Activated naive CD8-positive, alpha-beta T cell treated with anti-CD3 and anti-CD28 coated beads, Interleukin-2, amount 10 ng/mL, durations not matched to agents 7 days and 5 days (primary cell): ENCODE measurements at regions of chr1 and their contacts with region 1.

Region 1: DNA sequence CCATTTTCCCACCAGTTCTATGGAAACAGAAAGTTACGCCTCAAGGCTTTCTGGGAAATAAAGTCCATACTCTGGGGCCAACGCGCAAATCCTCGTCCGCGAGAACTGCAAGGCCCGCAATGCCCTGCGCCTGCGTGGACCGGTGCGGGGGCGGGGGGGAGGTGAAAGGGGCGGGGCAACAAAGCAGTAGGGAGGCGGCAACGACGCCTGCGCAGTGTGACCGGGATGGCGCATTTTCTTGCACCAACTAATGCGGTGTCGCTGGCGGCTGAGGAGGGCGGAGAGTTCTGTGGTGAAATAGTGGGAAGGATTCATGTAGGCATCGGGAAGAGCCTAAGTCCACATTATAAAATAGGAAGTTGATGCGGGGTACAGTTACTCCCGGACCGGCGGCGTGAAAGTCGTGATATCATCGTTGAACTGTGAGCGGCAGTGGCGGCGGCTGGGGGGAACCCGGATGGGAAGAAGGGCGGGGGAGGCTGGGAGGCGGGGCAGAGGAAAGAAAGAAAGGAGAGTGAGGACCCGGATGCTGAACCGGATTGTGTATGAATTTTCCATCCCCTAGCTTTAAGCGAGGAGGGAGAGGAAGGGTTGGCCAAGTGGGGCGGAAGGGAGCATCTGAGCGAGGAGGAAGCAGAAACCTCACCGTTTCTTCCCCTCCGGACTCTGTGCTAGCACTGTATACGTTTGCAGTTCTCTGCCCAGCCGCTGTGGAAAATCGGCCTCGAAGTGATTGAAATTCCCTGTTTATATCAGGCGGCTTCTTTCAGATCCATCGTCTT is at the start of gene GGPS1:
- DNase-seq: peak; percentile 95
- ATAC-seq: peak; percentile 82
- H3K4me3 Mint-ChIP-seq: no peak within 1 kb of the TSS
- H3K27ac Mint-ChIP-seq: no peak within 1 kb of the TSS
- H3K4me1 Mint-ChIP-seq: peaks cover 24% of the 10 kb centered on the region
- H3K27me3 Mint-ChIP-seq: no peaks in the 10 kb centered on the region
- total RNA-seq, gene GGPS1: 31.9 to 34.9 TPM

Region 2: GRCh38 chr1:235313931-235314678 is 14.4 kb before region 1 on chr1:
- POLR2A ChIA-PET with region 1: interaction called, 28 read pairs
- DNase-seq: no peak
- ATAC-seq: no peak
- H3K4me3 Mint-ChIP-seq: peak overlapping the region; percentile 51
- H3K27ac Mint-ChIP-seq: peak overlapping the region; percentile 31
- H3K4me1 Mint-ChIP-seq: peaks cover 51% of the 10 kb centered on the region
- H3K27me3 Mint-ChIP-seq: no peaks in the 10 kb centered on the region

Region 3: DNA sequence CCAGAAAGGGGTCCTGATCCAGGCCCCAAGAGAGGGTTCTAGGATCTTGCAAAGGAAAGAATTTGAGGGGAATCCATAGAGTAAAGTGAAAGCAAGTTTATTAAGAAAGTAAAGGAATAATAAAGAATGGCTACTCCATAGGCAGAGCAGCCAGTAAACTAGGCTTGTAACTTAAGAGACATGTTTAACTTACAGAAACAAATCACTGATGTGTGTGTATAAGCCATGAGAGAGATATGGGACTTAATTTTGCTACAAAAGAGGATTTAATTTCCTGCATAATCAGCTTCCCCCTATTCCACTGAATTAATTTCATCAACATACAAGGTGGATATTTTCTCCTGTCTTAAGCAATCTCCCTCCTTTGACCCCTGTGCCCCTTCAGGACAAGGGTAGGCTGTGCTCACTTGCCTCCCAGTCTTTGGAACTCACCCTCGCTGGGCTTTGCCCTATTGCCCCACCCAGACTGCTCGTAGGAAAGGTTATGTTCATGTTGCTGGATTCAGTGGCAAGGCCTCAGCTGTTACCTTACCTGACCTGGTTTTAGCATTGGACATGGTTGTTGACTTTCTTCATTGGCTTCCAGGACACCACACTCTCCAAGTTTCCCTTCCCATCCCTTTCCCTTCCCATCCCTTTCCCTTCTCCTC is 83.1 kb after region 1 on chr1:
- POLR2A ChIA-PET with region 1: no interaction called
- DNase-seq: no peak
- ATAC-seq: no peak
- H3K4me3 Mint-ChIP-seq: no peak overlapping the region
- H3K27ac Mint-ChIP-seq: no peak overlapping the region
- H3K4me1 Mint-ChIP-seq: no peaks in the 10 kb centered on the region
- H3K27me3 Mint-ChIP-seq: no peaks in the 10 kb centered on the region